ENCODE measurements at regions of chr5 and their contacts with region 1.

Region 1: GRCh38 chr5:115579747-115580173 is 22.5 kb downstream of the TICAM2 start:
- DNase-seq: no peak
- ATAC-seq: no peak
- H3K4me3 ChIP-seq: no peak overlapping the region
- H3K4me3 Mint-ChIP-seq: no peak overlapping the region
- H3K27ac ChIP-seq: no peak overlapping the region
- H3K27ac Mint-ChIP-seq: no peak overlapping the region
- H3K4me1 ChIP-seq: no peaks in the 10 kb centered on the region
- H3K4me1 Mint-ChIP-seq: no peaks in the 10 kb centered on the region
- H3K27me3 ChIP-seq: no peaks in the 10 kb centered on the region
- H3K27me3 Mint-ChIP-seq: no peaks in the 10 kb centered on the region

Region 2: GRCh38 chr5:115304496-115304895 is 275.3 kb before region 1 on chr5:
- CTCF ChIA-PET with region 1: interaction called, 56 to 169 read pairs
- POLR2A ChIA-PET with region 1: no interaction called
- DNase-seq: no peak
- ATAC-seq: no peak
- H3K4me3 ChIP-seq: no peak overlapping the region
- H3K4me3 Mint-ChIP-seq: no peak overlapping the region
- H3K27ac ChIP-seq: no peak overlapping the region
- H3K27ac Mint-ChIP-seq: no peak overlapping the region
- H3K4me1 ChIP-seq: no peaks in the 10 kb centered on the region
- H3K4me1 Mint-ChIP-seq: no peaks in the 10 kb centered on the region
- H3K27me3 ChIP-seq: peaks cover 4 to 5% of the 10 kb centered on the region in 2 experiments
- H3K27me3 Mint-ChIP-seq: peaks cover 18 to 23% of the 10 kb centered on the region in 2 donors

Region 3: GRCh38 chr5:115309751-115310370 is 269.9 kb before region 1 on chr5:
- CTCF ChIA-PET with region 1: interaction called, 56 to 169 read pairs
- POLR2A ChIA-PET with region 1: no interaction called
- DNase-seq: peak in 1 of 35 experiments; percentile 67
- ATAC-seq: peak in 1 of 4 experiments; percentile 55
- H3K4me3 ChIP-seq: no peak overlapping the region
- H3K4me3 Mint-ChIP-seq: no peak overlapping the region
- H3K27ac ChIP-seq: no peak overlapping the region
- H3K27ac Mint-ChIP-seq: no peak overlapping the region
- H3K4me1 ChIP-seq: no peaks in the 10 kb centered on the region
- H3K4me1 Mint-ChIP-seq: no peaks in the 10 kb centered on the region
- H3K27me3 ChIP-seq: peaks cover 3 to 7% of the 10 kb centered on the region in 2 experiments
- H3K27me3 Mint-ChIP-seq: peaks cover 24 to 32% of the 10 kb centered on the region in 2 donors

Region 4: GRCh38 chr5:115317320-115317719 is 262.4 kb before region 1 on chr5:
- CTCF ChIA-PET with region 1: interaction called, 56 to 169 read pairs
- POLR2A ChIA-PET with region 1: no interaction called
- DNase-seq: no peak
- ATAC-seq: no peak
- H3K4me3 ChIP-seq: no peak overlapping the region
- H3K4me3 Mint-ChIP-seq: no peak overlapping the region
- H3K27ac ChIP-seq: no peak overlapping the region
- H3K27ac Mint-ChIP-seq: no peak overlapping the region
- H3K4me1 ChIP-seq: no peaks in the 10 kb centered on the region
- H3K4me1 Mint-ChIP-seq: no peaks in the 10 kb centered on the region
- H3K27me3 ChIP-seq: no peaks in the 10 kb centered on the region
- H3K27me3 Mint-ChIP-seq: peaks cover 10 to 16% of the 10 kb centered on the region in 2 donors

Region 5: GRCh38 chr5:115472271-115473025 is 107.3 kb before region 1 on chr5:
- CTCF ChIA-PET with region 1: no interaction called
- POLR2A ChIA-PET with region 1: no interaction called
- DNase-seq: no peak
- ATAC-seq: no peak
- H3K4me3 ChIP-seq: no peak overlapping the region
- H3K4me3 Mint-ChIP-seq: no peak overlapping the region
- H3K27ac ChIP-seq: no peak overlapping the region
- H3K27ac Mint-ChIP-seq: no peak overlapping the region
- H3K4me1 ChIP-seq: no peaks in the 10 kb centered on the region
- H3K4me1 Mint-ChIP-seq: no peaks in the 10 kb centered on the region
- H3K27me3 ChIP-seq: no peaks in the 10 kb centered on the region
- H3K27me3 Mint-ChIP-seq: peaks cover 12 to 20% of the 10 kb centered on the region in 2 donors

Region 6: DNA sequence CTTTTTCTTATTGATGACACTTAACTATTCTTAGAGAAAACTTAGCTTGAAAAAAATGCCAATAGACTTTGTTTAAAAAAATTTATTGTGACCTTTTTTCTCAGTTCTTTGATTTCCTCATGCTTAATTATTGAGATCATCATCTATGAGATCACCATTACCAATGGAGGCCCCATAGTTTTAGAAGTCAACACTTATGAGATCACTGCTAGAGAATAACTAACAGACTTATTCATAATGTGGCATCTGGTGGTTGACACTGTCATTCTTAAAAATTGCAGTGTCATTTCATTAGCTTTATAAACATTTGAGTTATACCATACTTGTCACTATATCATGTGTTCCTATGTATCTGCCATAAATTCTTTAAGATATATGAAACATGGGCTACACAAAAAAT is 20.2 kb before region 1 on chr5:
- CTCF ChIA-PET with region 1: interaction called, 3 to 5 read pairs
- POLR2A ChIA-PET with region 1: interaction called in 1 of 2 experiments, 10 read pairs
- DNase-seq: no peak
- ATAC-seq: no peak
- H3K4me3 ChIP-seq: no peak overlapping the region
- H3K4me3 Mint-ChIP-seq: no peak overlapping the region
- H3K27ac ChIP-seq: no peak overlapping the region
- H3K27ac Mint-ChIP-seq: no peak overlapping the region
- H3K4me1 ChIP-seq: no peaks in the 10 kb centered on the region
- H3K4me1 Mint-ChIP-seq: peaks cover 0 to 12% (median 0%) of the 10 kb centered on the region in 3 donors
- H3K27me3 ChIP-seq: no peaks in the 10 kb centered on the region
- H3K27me3 Mint-ChIP-seq: peaks cover 3 to 17% of the 10 kb centered on the region in 2 donors

Region 7: DNA sequence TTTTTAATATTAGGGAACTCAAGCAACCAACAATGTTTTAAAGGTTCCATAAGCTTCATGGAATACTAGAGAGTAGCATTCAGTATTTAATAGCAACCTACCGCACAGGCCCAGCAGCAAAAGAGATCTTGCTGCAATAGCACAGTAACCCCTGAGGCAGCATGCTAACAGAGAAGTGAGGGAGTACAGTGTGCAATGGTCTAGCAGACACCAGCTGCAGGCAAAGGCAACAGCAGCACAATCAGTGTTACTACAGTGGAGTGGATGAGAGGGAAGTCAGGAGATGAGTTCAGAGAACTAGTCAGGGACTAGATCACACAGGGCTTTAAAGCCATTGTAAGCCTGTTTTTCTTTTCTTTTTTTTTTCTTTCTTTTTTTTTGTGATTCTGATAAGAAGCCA is 19.7 kb after region 1 on chr5:
- CTCF ChIA-PET with region 1: no interaction called
- POLR2A ChIA-PET with region 1: no interaction called
- DNase-seq: peak in 1 of 35 experiments; percentile 12
- ATAC-seq: no peak
- H3K4me3 ChIP-seq: no peak overlapping the region
- H3K4me3 Mint-ChIP-seq: peak overlapping the region in 1 of 3 donors; percentile 10
- H3K27ac ChIP-seq: no peak overlapping the region
- H3K27ac Mint-ChIP-seq: no peak overlapping the region
- H3K4me1 ChIP-seq: peaks cover 9 to 11% of the 10 kb centered on the region in 2 experiments
- H3K4me1 Mint-ChIP-seq: peaks cover 18 to 29% (median 24%) of the 10 kb centered on the region in 3 donors
- H3K27me3 ChIP-seq: no peaks in the 10 kb centered on the region
- H3K27me3 Mint-ChIP-seq: no peaks in the 10 kb centered on the region

Region 8: DNA sequence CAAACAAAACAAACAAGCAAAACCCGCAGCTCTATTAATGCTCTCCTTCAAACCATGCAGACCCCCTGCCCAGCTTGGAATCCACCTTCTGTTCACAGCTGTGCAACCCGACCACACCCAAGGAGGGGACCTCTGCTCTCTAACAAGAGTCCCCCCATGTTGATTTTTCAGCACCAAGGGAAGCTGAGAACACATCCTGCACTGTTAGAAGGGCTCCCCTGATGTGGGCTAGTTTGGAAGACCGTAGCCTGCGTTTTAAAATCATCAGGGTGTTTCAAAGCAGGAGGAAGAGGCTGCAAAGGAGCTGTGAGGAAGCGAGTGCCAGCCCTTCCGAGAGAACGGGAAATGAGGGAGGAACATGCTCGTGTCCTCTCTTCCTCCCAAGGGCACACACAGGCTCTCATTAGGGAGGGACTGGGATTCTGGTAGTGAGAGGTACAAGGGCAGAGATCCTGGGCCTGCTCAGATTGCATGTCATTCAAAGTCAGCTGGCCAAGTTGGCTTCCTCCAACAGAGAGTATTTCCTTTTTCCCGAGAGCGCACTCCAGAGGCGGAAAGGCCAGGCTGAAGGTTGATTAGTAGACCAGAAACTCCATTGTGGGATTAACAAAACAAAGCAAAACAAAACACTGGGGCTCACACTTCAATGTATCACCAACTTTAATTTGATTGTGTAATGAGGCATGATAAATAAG is 809.0 kb after region 1 on chr5:
- CTCF ChIA-PET with region 1: no interaction called
- POLR2A ChIA-PET with region 1: no interaction called
- DNase-seq: no peak
- ATAC-seq: no peak
- H3K4me3 ChIP-seq: no peak overlapping the region
- H3K4me3 Mint-ChIP-seq: no peak overlapping the region
- H3K27ac ChIP-seq: no peak overlapping the region
- H3K27ac Mint-ChIP-seq: no peak overlapping the region
- H3K4me1 ChIP-seq: no peaks in the 10 kb centered on the region
- H3K4me1 Mint-ChIP-seq: no peaks in the 10 kb centered on the region
- H3K27me3 ChIP-seq: no peaks in the 10 kb centered on the region
- H3K27me3 Mint-ChIP-seq: no peaks in the 10 kb centered on the region

Measured in T-cell (primary cell).